ENCODE measurements at regions of chr22 and their contacts with region 1.

Region 1: DNA sequence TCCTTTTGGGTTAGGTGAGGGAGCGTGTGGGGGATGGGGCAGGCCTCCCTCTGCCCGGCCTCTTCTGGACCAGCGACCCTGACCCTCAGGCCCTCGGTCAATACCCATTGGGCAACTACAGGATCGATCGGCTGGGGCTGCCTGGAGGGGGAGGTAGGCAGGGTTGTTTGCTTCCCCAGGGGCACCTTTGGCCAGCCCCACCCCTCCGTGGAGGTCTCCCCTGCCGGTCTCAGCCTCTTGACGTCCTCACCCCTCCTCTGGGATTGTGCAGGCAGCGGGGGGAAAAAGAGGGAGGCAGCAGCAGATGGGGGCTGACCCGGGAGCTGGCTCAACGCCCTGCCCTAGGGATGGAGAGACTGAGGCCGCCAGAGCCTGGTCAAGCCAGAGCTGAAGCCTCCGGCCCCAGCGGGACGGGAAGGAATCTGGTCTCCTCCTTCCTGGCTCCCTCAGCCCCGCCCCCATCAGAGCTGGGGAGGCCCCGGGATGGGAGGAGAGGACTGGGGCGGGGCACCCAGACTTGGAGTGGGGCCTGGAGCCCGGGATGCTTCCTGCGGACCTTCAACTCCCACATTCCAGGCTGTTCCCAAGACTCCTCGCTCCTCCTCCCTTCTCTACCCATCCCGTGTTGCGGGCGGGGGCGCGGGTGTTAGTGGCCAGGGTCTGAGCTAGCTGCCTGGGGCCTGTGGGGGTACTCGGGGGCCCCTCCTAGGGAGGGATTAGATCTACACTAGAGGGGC is 14.4 kb upstream of the CDC42EP1 start:
- DNase-seq: peak; percentile 95
- H3K4me3 ChIP-seq: no peak overlapping the region
- H3K27ac ChIP-seq: peak overlapping the region; percentile 77
- H3K4me1 ChIP-seq: peaks cover 20% of the 10 kb centered on the region
- H3K27me3 ChIP-seq: no peaks in the 10 kb centered on the region
- CTCF ChIP-seq: no peak

Region 2: DNA sequence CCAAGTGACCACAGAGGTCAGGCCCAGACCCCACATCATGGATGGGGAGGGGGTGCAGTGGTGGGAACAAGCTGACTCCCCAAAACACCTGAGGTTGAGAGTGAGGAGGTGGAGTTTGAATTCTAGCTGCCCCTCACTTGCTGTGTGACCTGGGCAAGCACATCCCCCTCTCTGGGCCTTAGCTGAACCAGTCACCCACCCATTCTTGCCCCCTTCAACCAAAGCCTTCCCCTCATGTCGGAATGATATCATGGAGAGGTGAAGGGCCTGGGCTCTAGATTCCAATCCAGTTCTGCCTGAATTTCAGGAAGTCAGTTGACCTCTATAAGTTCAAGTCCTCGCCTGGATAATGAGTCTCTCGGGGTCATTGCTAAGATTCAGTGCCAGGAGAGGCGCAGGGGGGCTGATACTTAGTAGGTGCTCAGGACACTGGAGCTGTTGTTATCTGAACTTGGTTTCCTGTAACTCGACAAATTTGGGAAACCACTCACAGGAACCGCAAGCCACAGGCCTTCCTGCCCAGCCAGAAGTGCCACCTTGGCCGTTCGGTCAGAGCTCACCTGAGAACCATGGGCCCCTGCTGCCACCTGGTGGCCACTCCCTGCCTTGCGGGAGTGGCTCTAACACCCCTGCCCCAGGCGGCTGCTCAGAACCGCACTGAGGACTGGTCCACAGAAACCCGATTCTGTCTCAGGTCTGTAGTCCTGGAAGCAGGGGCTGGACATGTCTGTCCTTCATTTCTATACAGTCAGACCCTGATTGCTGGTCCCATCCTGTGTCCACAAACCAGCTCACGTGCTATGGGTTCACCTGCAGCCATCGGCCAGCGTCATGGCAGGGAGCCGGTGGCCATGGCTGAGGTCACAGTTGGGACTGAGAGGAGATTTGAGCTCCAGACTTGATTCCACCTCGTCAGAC is 21.3 kb after region 1 on chr22:
- intact Hi-C with region 1: loop called (anchors 2 kb)
- DNase-seq: peak; percentile 96
- H3K4me3 ChIP-seq: no peak overlapping the region
- H3K27ac ChIP-seq: peak overlapping the region; percentile 51
- H3K4me1 ChIP-seq: peaks cover 42% of the 10 kb centered on the region
- H3K27me3 ChIP-seq: no peaks in the 10 kb centered on the region
- CTCF ChIP-seq: peak; percentile 98

Measured in colonic mucosa (tissue), 4 donors.